ENCODE measurements at regions of chr1 and their contacts with region 1.

Region 1: GRCh38 chr1:109548321-109549267 is at the start of gene GNAI3:
- DNase-seq: peak; percentile 94
- ATAC-seq: peak; percentile 98
- H3K4me3 ChIP-seq: peak within 1 kb of the TSS; percentile 83 to 96 (median 93)
- H3K27ac ChIP-seq: peak within 1 kb of the TSS; percentile 72
- H3K4me1 ChIP-seq: peaks cover 61% of the 10 kb centered on the region
- H3K27me3 ChIP-seq: no peaks in the 10 kb centered on the region; a peak in 2 of 5 replicates
- CTCF ChIP-seq: peak; percentile 17; the same call in 1 of the 2 replicates
- EP300 ChIP-seq: 0 out of 4 replicates have a peak, but pooled peaks of 1 of the 2 experiments have one; percentile 30
- POLR2A ChIP-seq: peak; percentile 94 to 96
- RAD21 ChIP-seq: no peak
- total RNA-seq, gene GNAI3: 9.0 and 11.0 TPM in 2 replicates

Region 2: GRCh38 chr1:109454497-109455133 is 94.0 kb before region 1 on chr1:
- CTCF ChIA-PET with region 1: no interaction called
- POLR2A ChIA-PET with region 1: no interaction called
- in situ Hi-C with region 1: no loop called
- intact Hi-C with region 1: no loop called
- DNase-seq: no peak
- ATAC-seq: no peak
- H3K4me3 ChIP-seq: no peak overlapping the region
- H3K27ac ChIP-seq: no peak overlapping the region
- H3K4me1 ChIP-seq: peaks cover 22% of the 10 kb centered on the region
- H3K27me3 ChIP-seq: no peaks in the 10 kb centered on the region; a peak in 1 of 5 replicates
- CTCF ChIP-seq: no peak
- EP300 ChIP-seq: no peak
- POLR2A ChIP-seq: no peak
- RAD21 ChIP-seq: no peak

Region 3: DNA sequence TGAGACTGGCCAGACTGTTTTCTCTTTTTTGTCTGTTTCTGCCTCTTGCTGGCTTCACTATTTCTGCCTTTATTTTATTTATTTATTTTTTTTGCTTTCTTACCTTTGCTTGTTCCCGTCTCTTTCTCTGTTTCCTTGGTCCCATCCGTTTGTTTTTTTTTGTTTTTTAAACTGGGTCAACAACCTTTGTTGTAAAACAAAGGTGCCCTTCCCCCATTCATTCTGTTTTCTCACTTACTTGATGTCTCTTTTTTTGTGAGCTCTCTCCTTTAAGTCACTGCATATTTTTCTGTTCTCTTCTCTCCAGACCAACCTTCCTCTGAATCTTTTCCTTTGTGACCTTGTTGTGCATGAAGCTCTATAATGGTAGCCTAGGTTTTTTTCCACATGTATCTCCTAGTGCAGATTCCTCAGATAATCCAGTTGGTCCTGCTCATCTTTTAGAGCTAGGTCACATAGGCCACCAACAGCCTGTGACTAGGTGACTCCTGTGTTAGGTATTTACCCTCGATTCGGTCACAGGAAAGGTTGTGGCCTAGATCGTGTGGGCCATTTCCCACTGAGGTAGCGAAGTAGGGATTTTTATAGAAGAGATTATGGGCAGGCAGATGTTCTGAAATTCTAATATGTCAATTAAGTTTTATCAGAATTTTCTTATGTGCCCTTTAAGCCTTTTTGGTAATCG is 15.7 kb after region 1 on chr1:
- CTCF ChIA-PET with region 1: no interaction called
- POLR2A ChIA-PET with region 1: interaction called, 19 read pairs
- in situ Hi-C with region 1: no loop called
- intact Hi-C with region 1: no loop called
- DNase-seq: no peak
- ATAC-seq: no peak
- H3K4me3 ChIP-seq: no peak overlapping the region
- H3K27ac ChIP-seq: no peak overlapping the region
- H3K4me1 ChIP-seq: peaks cover 82% of the 10 kb centered on the region
- H3K27me3 ChIP-seq: no peaks in the 10 kb centered on the region
- CTCF ChIP-seq: no peak
- EP300 ChIP-seq: no peak
- POLR2A ChIP-seq: no peak
- RAD21 ChIP-seq: no peak

Region 4: GRCh38 chr1:109579491-109579890 is 30.9 kb after region 1 on chr1:
- CTCF ChIA-PET with region 1: no interaction called
- POLR2A ChIA-PET with region 1: no interaction called
- in situ Hi-C with region 1: no loop called
- intact Hi-C with region 1: no loop called
- DNase-seq: no peak
- ATAC-seq: no peak
- H3K4me3 ChIP-seq: no peak overlapping the region
- H3K27ac ChIP-seq: no peak overlapping the region
- H3K4me1 ChIP-seq: peaks cover 10% of the 10 kb centered on the region
- H3K27me3 ChIP-seq: no peaks in the 10 kb centered on the region
- CTCF ChIP-seq: no peak
- EP300 ChIP-seq: no peak
- POLR2A ChIP-seq: no peak
- RAD21 ChIP-seq: no peak

Region 5: GRCh38 chr1:109620841-109621286 is 72.3 kb after region 1 on chr1:
- CTCF ChIA-PET with region 1: no interaction called
- POLR2A ChIA-PET with region 1: interaction called, 36 read pairs
- in situ Hi-C with region 1: loop called (anchors 5 kb)
- intact Hi-C with region 1: loop called (anchors 1 kb)
- DNase-seq: peak; percentile 88
- ATAC-seq: peak; percentile 74
- H3K4me3 ChIP-seq: peak overlapping the region; percentile 71 to 89 (median 80)
- H3K27ac ChIP-seq: peak overlapping the region; percentile 92
- H3K4me1 ChIP-seq: peaks cover 59% of the 10 kb centered on the region
- H3K27me3 ChIP-seq: no peaks in the 10 kb centered on the region; a peak in 1 of 5 replicates
- CTCF ChIP-seq: no peak
- EP300 ChIP-seq: no peak
- POLR2A ChIP-seq: 0 out of 4 replicates have a peak, but pooled peaks of 1 of the 2 experiments have one; percentile 15
- RAD21 ChIP-seq: no peak

Region 6: GRCh38 chr1:109636201-109636952 is 87.8 kb after region 1 on chr1:
- CTCF ChIA-PET with region 1: interaction called, 7 read pairs
- POLR2A ChIA-PET with region 1: interaction called, 23 read pairs
- in situ Hi-C with region 1: no loop called
- intact Hi-C with region 1: loop called (anchors 2 kb)
- DNase-seq: peak; percentile 46
- ATAC-seq: peak; percentile 35
- H3K4me3 ChIP-seq: peak overlapping the region in 2 of 3 experiments; percentile 24 to 52; a peak in 3 of 6 replicates
- H3K27ac ChIP-seq: peak overlapping the region; percentile 39
- H3K4me1 ChIP-seq: peaks cover 27% of the 10 kb centered on the region
- H3K27me3 ChIP-seq: no peaks in the 10 kb centered on the region
- CTCF ChIP-seq: peak; percentile 41
- EP300 ChIP-seq: no peak; a peak in 1 of 4 replicates
- POLR2A ChIP-seq: no peak
- RAD21 ChIP-seq: no peak

Region 7: DNA sequence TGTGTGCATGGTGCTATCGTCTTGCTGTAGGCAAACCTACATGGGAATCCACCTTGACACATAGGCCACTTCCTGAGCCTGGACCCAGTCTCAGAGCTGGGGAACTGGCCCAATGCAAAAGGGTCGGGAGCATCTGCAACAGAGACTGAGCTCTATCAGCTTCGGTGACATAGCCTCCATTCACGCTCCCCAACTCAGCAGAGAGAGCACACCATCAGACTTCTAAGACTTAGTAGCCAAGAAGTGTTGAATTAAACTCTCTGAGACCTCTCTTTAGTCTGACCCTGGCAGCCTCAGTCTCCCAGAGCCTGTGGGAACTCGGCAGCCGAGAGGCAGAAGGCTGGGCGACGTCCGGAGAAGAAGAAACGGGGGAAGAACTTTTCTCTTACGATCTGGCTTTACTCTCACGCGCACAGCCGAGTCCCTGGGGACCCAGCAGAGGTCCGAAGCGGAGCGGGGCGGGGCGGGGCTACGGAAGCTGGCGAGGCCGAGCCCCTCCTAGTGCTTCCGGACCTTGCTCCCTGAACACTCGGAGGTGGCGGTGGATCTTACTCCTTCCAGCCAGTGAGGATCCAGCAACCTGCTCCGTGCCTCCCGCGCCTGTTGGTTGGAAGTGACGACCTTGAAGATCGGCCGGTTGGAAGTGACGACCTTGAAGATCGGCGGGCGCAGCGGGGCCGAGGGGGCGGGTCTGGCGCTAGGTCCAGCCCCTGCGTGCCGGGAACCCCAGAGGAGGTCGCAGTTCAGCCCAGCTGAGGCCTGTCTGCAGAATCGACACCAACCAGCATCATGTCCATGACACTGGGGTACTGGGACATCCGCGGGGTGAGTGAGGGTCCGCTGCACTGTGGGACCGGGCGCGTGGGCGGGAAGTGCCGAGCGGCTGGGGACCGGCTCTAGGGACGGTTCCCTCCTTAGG is 107.3 kb after region 1 on chr1 and contains the start of gene GSTM4:
- CTCF ChIA-PET with region 1: no interaction called
- POLR2A ChIA-PET with region 1: interaction called, 10 read pairs
- in situ Hi-C with region 1: no loop called
- intact Hi-C with region 1: no loop called
- DNase-seq: peak; percentile 59
- ATAC-seq: peak; percentile 97
- H3K4me3 ChIP-seq: peak within 1 kb of the TSS; percentile 83 to 88 (median 86)
- H3K27ac ChIP-seq: peak within 1 kb of the TSS; percentile 59
- H3K4me1 ChIP-seq: peaks cover 35% of the 10 kb centered on the region
- H3K27me3 ChIP-seq: 0 out of 5 replicates have a peak, but pooled peaks cover 0 to 4% of the 10 kb centered on the region in 2 experiments
- CTCF ChIP-seq: peak; percentile 55; the same call in 1 of the 2 replicates
- EP300 ChIP-seq: no peak
- POLR2A ChIP-seq: peak in 1 of 2 experiments; percentile 85; a peak in 2 of 4 replicates
- RAD21 ChIP-seq: no peak
- total RNA-seq, gene GSTM4: 25.3 and 30.6 TPM in 2 replicates

Region 8: DNA sequence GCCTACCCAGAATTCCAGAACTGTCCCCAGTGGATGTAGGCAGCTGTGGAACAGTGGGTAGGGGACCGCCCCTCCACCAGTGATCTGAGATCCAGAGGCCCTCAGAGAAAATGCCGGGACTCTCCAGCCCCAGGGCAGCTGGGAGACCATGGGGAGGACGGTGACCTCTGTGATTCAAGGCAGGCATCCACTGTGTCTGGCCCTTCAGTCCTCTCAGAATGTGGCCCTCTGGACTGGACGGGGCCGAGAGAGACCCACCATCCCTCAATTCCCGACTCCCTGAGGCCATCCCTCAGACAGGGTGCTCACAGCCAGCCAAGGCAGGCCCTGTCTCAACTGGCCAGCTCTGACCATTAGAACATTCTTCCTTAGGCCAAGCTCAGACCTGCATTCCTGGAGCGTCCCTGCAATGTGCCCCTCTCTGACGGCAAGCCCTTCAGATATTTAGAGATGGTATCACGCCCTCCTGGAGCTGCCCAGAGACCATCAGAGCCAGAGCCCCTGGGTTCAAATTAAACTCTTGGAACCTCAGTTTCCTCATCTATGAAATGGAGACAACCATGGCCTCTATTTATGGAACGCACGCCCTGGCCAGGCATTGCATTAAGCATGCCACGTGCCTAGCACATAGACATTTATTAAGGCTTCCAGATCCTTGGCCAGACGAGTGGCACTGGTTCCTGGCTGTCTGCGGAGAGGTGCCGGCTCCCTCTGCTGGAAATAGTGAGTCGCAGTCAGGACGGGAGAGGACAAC is 224.7 kb after region 1 on chr1:
- CTCF ChIA-PET with region 1: interaction called, 5 read pairs
- POLR2A ChIA-PET with region 1: no interaction called
- in situ Hi-C with region 1: loop called (anchors 5 kb)
- intact Hi-C with region 1: loop called (anchors 1 kb)
- DNase-seq: peak; percentile 78
- ATAC-seq: peak; percentile 86
- H3K4me3 ChIP-seq: no peak overlapping the region
- H3K27ac ChIP-seq: no peak overlapping the region
- H3K4me1 ChIP-seq: peaks cover 42% of the 10 kb centered on the region
- H3K27me3 ChIP-seq: peaks cover 2 to 19% of the 10 kb centered on the region in 2 experiments; a peak in 3 of 5 replicates
- CTCF ChIP-seq: peak; percentile 98
- EP300 ChIP-seq: no peak
- POLR2A ChIP-seq: no peak
- RAD21 ChIP-seq: peak; percentile 96

Measured in HepG2 (cell line).